B cell (primary cell): ENCODE measurements at regions of chr10 and their contacts with region 1.

Region 1: GRCh38 chr10:1737222-1738061 is at the start of gene ADARB2:
- DNase-seq: peak; percentile 60
- ATAC-seq: peak; percentile 72
- H3K4me3 ChIP-seq: peak within 1 kb of the TSS; percentile 16 to 50 (median 42)
- H3K4me3 Mint-ChIP-seq: peak within 1 kb of the TSS; percentile 61
- H3K27ac ChIP-seq: no peak within 1 kb of the TSS
- H3K27ac Mint-ChIP-seq: no peak within 1 kb of the TSS
- H3K4me1 ChIP-seq: peaks cover 32 to 36% of the 10 kb centered on the region in 2 donors
- H3K4me1 Mint-ChIP-seq: peaks cover 33% of the 10 kb centered on the region
- H3K27me3 ChIP-seq: peaks cover 0 to 64% (median 53%) of the 10 kb centered on the region in 4 experiments
- H3K27me3 Mint-ChIP-seq: peaks cover 77% of the 10 kb centered on the region
- CTCF ChIP-seq: no peak
- total RNA-seq, gene ADARB2: 0.85 and 0.96 TPM in 2 replicates

Region 2: DNA sequence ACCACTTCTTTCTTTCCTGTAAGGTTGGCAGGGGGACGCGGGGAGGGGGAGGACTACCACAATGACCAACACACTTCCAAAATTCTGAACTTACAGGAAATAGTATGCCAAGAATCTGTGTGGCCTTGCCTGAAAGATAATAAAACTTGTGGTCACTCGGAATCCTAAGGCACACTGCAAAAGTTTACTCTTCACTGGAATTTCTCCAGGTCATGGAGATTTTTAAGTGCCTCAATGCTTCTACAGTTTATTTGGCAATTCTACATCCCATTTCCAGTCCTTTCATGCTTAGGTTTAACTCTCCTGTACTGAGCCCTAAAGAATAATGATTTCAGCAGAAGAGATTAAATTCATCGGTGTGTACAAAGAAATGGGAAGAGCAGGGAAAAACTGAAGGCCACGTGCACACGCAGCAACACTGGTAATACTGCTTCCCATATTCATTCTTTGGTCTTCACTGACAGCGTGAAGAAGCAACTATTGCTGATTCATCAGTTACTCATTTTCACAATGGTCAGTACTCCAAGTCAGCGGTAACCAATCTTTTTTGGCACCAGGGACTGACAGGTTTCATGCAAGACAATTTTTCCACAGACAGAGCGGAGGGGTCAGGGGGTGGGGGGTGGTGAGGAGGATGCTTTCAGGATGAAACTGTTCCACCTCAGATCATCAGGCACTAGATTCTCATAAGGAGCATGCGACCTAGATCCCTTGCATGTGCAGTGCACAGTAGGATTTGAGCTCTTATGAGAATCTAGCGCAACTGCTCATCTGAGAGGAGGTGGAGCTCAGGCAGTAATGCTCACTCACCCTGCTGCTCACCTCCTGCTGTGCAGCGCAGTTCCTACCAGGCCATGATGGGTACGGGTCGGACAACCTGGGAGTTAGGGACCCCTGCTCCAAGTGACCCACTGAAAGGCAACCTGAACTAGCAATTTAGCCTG is 815.7 kb before region 1 on chr10:
- CTCF ChIA-PET with region 1: no interaction called
- POLR2A ChIA-PET with region 1: no interaction called
- intact Hi-C with region 1: no loop called
- DNase-seq: no peak
- ATAC-seq: no peak
- H3K4me3 ChIP-seq: no peak overlapping the region
- H3K4me3 Mint-ChIP-seq: no peak overlapping the region
- H3K27ac ChIP-seq: no peak overlapping the region
- H3K27ac Mint-ChIP-seq: no peak overlapping the region
- H3K4me1 ChIP-seq: peaks cover 4 to 5% of the 10 kb centered on the region in 2 donors
- H3K4me1 Mint-ChIP-seq: peaks cover 42% of the 10 kb centered on the region
- H3K27me3 ChIP-seq: no peaks in the 10 kb centered on the region
- H3K27me3 Mint-ChIP-seq: no peaks in the 10 kb centered on the region
- CTCF ChIP-seq: no peak

Region 3: DNA sequence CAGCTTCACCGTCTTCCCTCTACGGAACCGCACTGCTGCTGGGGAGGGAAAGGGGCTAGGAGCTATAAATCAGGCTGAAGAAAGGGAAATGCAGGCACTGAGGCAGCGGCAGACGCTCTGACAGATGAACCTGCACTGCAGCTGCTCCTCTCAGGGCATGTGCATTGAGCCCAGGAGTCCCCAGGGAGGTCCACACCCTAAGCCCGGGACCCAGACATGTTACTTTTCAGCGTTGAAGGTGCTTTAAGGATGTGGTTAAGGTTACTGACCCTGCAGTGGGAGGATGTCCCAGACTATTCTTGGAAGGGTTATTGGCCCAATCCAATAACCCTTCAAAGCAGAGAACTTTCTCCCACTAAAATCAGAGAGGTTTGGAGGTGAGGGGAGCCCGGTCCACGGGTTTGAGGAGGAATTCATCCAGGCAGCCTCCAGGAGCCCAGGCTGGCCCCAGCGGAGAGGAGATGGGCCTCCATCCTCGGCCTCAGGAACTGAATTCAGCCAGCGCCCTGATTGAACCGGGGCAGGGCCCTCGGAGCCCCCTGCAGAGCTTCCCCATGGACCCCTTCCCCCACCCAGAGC is 75.5 kb before region 1 on chr10:
- CTCF ChIA-PET with region 1: no interaction called
- POLR2A ChIA-PET with region 1: no interaction called
- intact Hi-C with region 1: loop called (anchors 10 kb)
- DNase-seq: peak; percentile 87
- ATAC-seq: peak; percentile 89
- H3K4me3 ChIP-seq: peak overlapping the region in 2 of 5 experiments; percentile 1 to 20
- H3K4me3 Mint-ChIP-seq: peak overlapping the region; percentile 79
- H3K27ac ChIP-seq: peak overlapping the region; percentile 68 to 71
- H3K27ac Mint-ChIP-seq: peak overlapping the region; percentile 75
- H3K4me1 ChIP-seq: peaks cover 31 to 32% of the 10 kb centered on the region in 2 donors
- H3K4me1 Mint-ChIP-seq: peaks cover 50% of the 10 kb centered on the region
- H3K27me3 ChIP-seq: peaks cover 0 to 5% (median 2%) of the 10 kb centered on the region in 4 experiments
- H3K27me3 Mint-ChIP-seq: peaks cover 19% of the 10 kb centered on the region
- CTCF ChIP-seq: no peak